Activated CD4-positive, alpha-beta T cell treated with anti-CD3 and anti-CD28 coated beads, Interleukin-2, amount 10 ng/mL, durations not matched to agents 24 days and 14 days (primary cell): ENCODE measurements at regions of chr1 and their contacts with region 1.

Region 1: DNA sequence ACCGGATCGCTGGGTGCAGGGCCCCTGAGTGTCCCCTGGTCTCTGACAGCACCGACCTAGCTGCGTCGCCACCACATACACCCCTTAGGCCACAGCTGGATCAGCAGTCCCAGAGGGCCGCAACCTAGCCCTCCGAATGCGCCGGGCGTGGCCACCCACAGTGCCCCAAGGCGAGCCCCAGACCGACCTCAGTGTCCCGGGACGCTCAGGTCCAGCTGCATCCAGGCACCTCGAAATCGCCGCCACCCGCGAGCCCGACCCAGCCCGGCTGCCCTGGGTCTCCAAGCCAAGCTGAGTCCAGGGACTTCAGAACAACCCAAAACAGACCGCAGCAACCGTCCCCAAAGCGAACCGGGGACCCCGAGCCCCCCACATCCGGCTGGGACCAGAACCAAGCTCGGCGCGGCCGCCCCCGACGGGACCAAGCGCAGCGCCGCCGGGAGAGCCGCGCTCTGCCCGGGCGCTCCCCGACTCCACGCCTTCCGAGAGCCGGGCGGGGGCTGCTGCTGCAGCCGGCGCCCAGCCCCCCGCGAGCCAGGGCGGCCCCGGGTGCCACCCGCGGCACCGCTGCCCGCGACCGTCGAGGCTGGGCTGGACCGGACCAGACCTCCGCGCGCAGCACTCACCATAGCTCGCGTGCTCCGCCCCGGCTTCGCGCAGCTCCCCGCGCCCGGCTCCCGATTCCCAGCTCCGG is 54.6 kb upstream of the ECE1 start:
- DNase-seq: no peak
- H3K4me3 Mint-ChIP-seq: peak overlapping the region; percentile 88
- H3K27ac Mint-ChIP-seq: peak overlapping the region; percentile 85
- H3K4me1 Mint-ChIP-seq: peaks cover 39% of the 10 kb centered on the region
- H3K27me3 Mint-ChIP-seq: no peaks in the 10 kb centered on the region

Region 2: GRCh38 chr1:21308847-21309652 is 35.8 kb before region 1 on chr1:
- intact Hi-C with region 1: no loop called
- DNase-seq: no peak
- H3K4me3 Mint-ChIP-seq: no peak overlapping the region
- H3K27ac Mint-ChIP-seq: peak overlapping the region; percentile 20
- H3K4me1 Mint-ChIP-seq: peaks cover 54% of the 10 kb centered on the region
- H3K27me3 Mint-ChIP-seq: no peaks in the 10 kb centered on the region

Region 3: DNA sequence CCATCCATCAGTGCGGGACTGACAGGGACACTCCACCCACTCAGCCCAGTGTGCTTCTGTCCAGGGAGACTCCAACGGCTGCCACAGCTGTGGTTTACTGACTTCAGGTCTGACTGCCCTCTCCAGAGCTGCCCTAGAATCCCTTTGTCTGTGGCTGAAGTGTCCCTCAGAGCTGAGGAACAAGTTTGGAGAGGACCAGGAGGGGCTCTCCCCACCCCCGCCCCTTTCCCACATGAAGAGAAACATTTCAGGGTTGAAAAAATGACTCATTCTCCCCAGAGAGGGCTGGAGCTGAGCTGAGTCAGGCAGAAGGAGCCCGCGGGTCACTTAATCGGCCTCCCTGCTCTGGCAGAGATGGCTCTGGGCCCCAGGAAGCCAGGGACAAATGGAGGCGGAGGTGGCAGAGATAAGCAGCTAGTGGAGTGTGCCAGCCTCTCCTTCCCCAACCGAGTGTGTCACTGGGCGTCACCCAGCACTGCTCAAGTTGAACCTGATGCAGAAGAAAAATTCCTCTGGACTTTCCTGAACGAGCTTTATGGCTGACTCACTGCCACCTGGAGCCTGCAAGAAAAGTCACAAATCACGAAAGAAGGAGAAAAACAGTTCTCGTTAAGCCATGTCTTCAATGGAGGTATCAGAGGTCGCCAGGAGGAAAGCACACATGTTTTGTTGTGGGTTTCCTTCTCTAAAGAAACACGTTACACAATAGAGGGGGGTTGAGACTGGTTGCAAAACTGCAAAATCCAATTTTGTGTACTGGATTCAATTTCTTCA is 20.3 kb before region 1 on chr1:
- intact Hi-C with region 1: loop called (anchors 1 kb)
- DNase-seq: peak; percentile 82
- H3K4me3 Mint-ChIP-seq: peak overlapping the region; percentile 79
- H3K27ac Mint-ChIP-seq: peak overlapping the region; percentile 94
- H3K4me1 Mint-ChIP-seq: peaks cover 71% of the 10 kb centered on the region
- H3K27me3 Mint-ChIP-seq: no peaks in the 10 kb centered on the region

Region 4: GRCh38 chr1:21334214-21335087 is 10.4 kb before region 1 on chr1:
- intact Hi-C with region 1: loop called (anchors 1 kb)
- DNase-seq: peak; percentile 95
- H3K4me3 Mint-ChIP-seq: peak overlapping the region; percentile 80
- H3K27ac Mint-ChIP-seq: peak overlapping the region; percentile 96
- H3K4me1 Mint-ChIP-seq: peaks cover 78% of the 10 kb centered on the region
- H3K27me3 Mint-ChIP-seq: no peaks in the 10 kb centered on the region